IMR-90 (cell line): ENCODE measurements at regions of chr16 and their contacts with region 1.

Region 1: GRCh38 chr16:947255-947921 is 23.4 kb downstream of the LMF1 start:
- DNase-seq: no peak
- ATAC-seq: no peak
- H3K4me3 ChIP-seq: no peak overlapping the region
- H3K27ac ChIP-seq: no peak overlapping the region
- H3K4me1 ChIP-seq: peaks cover 7% of the 10 kb centered on the region; the same call in 1 of the 2 replicates
- H3K27me3 ChIP-seq: no peaks in the 10 kb centered on the region
- CTCF ChIP-seq: no peak
- POLR2A ChIP-seq: no peak
- RAD21 ChIP-seq: no peak

Region 2: DNA sequence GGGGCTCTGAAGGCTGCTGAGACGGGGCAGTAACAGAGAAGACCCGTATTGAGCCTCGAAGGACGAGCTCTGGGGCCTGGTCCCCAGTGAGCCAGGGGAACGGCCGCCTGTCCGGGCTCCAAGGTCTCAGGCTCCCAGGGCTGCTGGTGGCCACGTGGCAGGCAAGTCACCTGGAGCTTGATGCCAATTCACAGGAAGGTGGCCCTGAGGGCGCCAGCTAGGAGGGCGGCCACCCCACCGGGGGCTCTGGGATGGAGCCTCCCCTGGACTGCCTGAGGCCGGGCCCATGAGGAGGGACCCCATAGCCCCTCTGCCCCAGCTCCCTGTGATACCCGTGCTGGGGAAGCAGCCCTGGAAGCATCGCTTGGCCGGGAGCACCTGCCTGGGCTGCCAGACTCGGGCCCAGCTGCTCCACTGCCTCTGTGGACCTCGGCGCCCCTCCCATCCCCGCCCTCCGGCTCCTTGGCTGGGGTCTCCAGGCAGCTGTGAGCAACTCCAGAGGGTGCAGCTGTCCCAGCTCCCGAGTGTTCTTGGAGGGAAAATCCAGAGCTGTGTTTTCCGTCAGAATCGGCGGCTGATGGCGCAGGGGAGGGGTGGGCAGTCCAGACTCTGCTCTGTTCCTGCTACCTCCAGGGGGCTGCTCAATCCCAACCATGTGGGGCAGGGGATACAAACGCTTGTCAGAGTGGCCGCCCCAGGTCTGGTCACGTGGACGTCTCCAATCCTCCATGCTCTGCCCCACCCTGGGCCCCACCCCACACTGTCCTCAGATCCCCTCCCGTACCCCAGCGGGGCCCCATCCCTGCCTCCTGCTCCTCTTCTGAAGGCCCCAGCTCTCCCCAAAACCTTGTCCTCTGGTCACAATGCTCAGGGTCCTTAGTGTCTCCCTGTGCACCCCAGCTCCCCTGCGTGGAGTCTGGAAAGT is 79.7 kb before region 1 on chr16:
- CTCF ChIA-PET with region 1: no interaction called
- POLR2A ChIA-PET with region 1: no interaction called
- dilution Hi-C with region 1: no loop called
- in situ Hi-C with region 1: no loop called
- intact Hi-C with region 1: loop called (anchors 10 kb)
- DNase-seq: no peak
- ATAC-seq: no peak
- H3K4me3 ChIP-seq: no peak overlapping the region
- H3K27ac ChIP-seq: no peak overlapping the region
- H3K4me1 ChIP-seq: no peaks in the 10 kb centered on the region
- H3K27me3 ChIP-seq: no peaks in the 10 kb centered on the region
- CTCF ChIP-seq: no peak
- POLR2A ChIP-seq: no peak
- RAD21 ChIP-seq: no peak

Region 3: DNA sequence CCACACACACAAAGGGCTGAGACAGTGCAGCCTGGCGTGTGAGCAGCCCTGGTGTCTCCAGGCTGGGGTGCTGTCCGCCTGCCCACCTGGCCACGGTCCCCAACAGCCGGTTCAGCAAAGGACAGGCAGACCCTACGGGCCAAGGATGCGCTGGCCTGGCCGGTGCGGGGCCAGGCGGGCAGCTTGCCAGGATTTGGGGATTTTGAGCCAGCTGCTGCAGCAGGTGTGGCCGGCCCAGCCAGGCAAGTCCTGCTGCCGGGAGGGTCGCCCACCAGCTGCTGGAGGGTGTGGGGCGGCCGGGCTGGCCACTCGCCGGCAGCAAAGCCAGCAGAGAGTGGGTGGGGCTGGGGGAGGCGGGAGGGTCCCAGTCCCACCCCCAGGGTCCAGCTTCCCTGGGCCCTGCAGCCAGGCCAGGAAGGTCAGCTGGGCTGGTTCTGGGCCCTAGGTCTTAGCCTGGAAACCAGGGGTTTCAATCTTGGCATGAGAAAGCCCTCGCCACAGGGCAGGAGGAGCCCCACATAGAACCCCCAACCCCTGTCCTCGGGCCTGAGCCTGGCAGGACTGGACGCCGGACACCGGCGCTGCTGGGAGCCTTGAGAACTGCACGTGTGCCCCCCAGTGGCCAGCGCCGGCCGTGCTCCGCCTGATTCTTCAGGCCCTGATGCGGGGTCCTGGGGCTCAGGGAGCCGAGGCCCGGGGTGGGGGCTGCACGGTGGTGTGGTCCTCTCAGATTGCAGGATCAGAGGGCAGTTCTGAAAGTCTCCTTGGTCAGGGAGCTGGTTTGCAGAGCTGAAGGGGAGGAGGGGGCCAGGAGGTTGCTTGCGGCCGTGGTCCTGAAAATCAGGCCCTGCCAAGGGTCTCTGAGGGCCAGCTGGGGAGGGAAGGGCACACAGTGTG is 107.5 kb after region 1 on chr16:
- CTCF ChIA-PET with region 1: no interaction called
- POLR2A ChIA-PET with region 1: no interaction called
- dilution Hi-C with region 1: no loop called
- in situ Hi-C with region 1: no loop called
- intact Hi-C with region 1: no loop called
- DNase-seq: peak; percentile 29
- ATAC-seq: peak; percentile 97
- H3K4me3 ChIP-seq: no peak overlapping the region
- H3K27ac ChIP-seq: no peak overlapping the region
- H3K4me1 ChIP-seq: no peaks in the 10 kb centered on the region
- H3K27me3 ChIP-seq: peaks cover 13% of the 10 kb centered on the region; the same call in 1 of the 2 replicates
- CTCF ChIP-seq: peak; percentile 80
- POLR2A ChIP-seq: no peak
- RAD21 ChIP-seq: peak; percentile 86